Posterior vena cava (tissue), 2 donors: ENCODE measurements at regions of chr1 and their contacts with region 1.

Region 1: GRCh38 chr1:37817481-37817880 is 9.5 kb upstream of the YRDC start:
- DNase-seq: no peak

Region 2: DNA sequence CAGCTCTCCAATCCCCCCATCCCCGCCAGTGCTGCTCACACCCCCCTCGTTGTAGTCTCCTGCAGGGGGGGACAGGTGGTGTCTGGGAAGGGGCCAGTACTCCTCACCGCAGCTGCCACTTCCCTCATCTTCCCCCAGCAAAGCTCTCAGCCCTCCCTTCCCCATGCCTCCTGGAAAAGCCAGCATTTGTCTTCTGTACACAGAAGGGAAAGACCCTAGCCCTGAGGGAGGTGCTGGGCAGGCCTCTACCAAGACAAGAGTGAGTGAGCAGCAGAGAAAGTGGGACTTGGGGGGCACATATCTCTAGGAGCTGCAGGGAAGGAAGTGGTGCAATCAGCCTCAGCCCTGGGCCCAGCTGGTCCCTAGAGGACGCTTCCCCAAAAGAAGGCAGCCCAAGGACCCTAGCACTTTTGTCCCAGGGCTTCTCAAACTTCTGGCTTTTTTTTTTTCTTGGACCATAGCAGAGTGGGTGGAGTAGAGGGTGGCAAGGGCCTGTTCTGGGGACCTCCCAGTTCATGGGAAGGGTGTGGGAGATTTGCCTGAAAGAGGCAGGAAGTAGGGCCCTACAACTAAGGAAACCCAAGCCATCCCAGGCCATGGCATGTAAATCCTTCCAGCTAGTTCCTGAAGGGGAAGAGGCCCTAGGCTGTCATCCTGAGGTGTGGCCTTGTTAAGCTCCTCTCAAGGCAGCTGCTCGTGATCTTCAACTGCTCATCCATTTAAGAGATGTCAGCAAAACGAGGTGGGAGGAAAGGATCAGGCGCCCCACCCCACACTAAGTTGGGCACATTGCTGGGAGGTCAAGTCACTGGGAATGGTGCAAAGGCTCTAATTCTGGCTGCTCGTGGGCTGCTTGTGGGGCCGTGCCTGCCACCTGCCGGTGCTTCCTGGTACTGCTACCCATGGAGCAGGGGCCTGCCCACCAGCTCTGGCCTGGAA is 330.5 kb before region 1 on chr1:
- intact Hi-C with region 1: no loop called
- DNase-seq: peak; percentile 96

Region 3: DNA sequence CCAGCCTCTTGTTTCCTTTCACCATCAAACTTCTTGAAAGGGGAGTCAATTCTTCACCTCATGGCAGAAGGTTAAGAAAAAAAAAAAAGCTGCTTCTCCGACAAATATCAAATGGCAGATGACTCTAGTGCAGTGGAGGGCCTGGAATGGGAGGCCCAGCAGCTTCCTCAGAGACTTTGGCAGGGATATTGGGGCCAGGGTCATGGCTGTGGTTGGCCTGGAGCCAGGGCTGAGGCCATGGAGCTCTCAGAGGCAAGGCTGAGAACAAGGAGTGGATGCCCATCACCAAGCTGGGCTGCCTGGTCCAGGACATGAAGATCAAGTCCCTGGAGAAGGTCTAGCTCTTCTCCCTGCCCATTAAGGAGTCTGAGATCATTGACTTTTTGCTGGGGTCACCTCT is 23.2 kb after region 1 on chr1:
- intact Hi-C with region 1: loop called in 1 of 2 experiments (anchors 1 kb)
- DNase-seq: no peak

Region 4: GRCh38 chr1:37919277-37919676 is 101.8 kb after region 1 on chr1:
- intact Hi-C with region 1: no loop called
- DNase-seq: no peak